Activated B cell treated with CpG ODN at 0.5 μM for 24 hours (primary cell): ENCODE measurements at regions of chr9 and their contacts with region 1.

Region 1: GRCh38 chr9:99231711-99232110 is 9.6 kb downstream of the SEC61B start:
- DNase-seq: peak; percentile 46
- ATAC-seq: peak; percentile 11
- H3K4me3 Mint-ChIP-seq: peak overlapping the region; percentile 47
- H3K27ac Mint-ChIP-seq: peak overlapping the region; percentile 65
- H3K4me1 Mint-ChIP-seq: peaks cover 45% of the 10 kb centered on the region
- H3K27me3 Mint-ChIP-seq: no peaks in the 10 kb centered on the region
- CTCF ChIP-seq: no peak

Region 2: GRCh38 chr9:99244344-99245260 is 12.9 kb after region 1 on chr9:
- CTCF ChIA-PET with region 1: interaction called, 19 read pairs
- POLR2A ChIA-PET with region 1: interaction called, 22 read pairs
- intact Hi-C with region 1: loop called (anchors 1 kb)
- DNase-seq: no peak
- ATAC-seq: peak; percentile 92
- H3K4me3 Mint-ChIP-seq: peak overlapping the region; percentile 55
- H3K27ac Mint-ChIP-seq: peak overlapping the region; percentile 95
- H3K4me1 Mint-ChIP-seq: peaks cover 51% of the 10 kb centered on the region
- H3K27me3 Mint-ChIP-seq: no peaks in the 10 kb centered on the region
- CTCF ChIP-seq: no peak

Region 3: DNA sequence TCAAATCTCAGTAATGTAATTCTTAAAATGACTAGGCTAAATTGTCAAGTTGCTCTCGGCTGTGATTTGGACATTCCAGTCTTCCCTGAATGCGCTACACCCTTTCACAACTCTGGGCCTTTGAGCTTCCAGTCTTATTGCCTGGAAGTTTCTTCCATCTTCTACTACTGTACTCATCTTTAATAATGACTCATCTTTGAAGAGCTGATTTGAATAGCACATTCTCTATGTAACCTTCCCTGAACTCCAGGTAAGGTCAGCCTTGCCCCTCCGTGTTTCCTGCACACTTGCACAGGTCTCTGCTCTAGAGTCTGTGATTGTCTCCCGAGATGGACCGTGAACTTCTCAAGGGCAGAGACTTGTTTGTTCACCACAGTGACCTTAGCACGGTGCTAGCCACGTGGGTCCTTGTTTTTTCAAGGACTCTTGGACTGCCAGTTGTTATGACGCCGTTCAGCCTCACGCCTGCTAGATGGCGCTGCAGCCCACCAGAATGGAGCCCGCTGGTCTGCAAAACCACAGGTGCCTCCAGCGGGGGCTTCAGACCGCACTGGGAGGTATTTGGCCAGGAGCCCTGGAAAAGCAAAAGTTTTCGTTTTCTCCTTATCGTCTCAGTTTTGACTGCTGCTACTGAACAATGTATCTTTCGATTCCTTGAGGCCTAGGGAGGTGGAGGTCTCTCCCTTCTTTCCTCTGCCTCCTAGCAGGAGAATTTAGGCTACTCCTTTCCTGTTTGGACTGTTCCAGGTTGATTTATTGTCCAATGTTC is 34.7 kb after region 1 on chr9:
- CTCF ChIA-PET with region 1: interaction called, 73 read pairs
- POLR2A ChIA-PET with region 1: interaction called, 21 read pairs
- intact Hi-C with region 1: loop called (anchors 1 kb)
- DNase-seq: peak; percentile 71
- ATAC-seq: peak; percentile 74
- H3K4me3 Mint-ChIP-seq: peak overlapping the region; percentile 67
- H3K27ac Mint-ChIP-seq: peak overlapping the region; percentile 85
- H3K4me1 Mint-ChIP-seq: peaks cover 49% of the 10 kb centered on the region
- H3K27me3 Mint-ChIP-seq: no peaks in the 10 kb centered on the region
- CTCF ChIP-seq: no peak

Region 4: GRCh38 chr9:99353408-99353807 is 121.7 kb after region 1 on chr9:
- CTCF ChIA-PET with region 1: no interaction called
- POLR2A ChIA-PET with region 1: no interaction called
- intact Hi-C with region 1: no loop called
- DNase-seq: no peak
- ATAC-seq: no peak
- H3K4me3 Mint-ChIP-seq: no peak overlapping the region
- H3K27ac Mint-ChIP-seq: no peak overlapping the region
- H3K4me1 Mint-ChIP-seq: no peaks in the 10 kb centered on the region
- H3K27me3 Mint-ChIP-seq: peaks cover 3% of the 10 kb centered on the region
- CTCF ChIP-seq: no peak

Region 5: DNA sequence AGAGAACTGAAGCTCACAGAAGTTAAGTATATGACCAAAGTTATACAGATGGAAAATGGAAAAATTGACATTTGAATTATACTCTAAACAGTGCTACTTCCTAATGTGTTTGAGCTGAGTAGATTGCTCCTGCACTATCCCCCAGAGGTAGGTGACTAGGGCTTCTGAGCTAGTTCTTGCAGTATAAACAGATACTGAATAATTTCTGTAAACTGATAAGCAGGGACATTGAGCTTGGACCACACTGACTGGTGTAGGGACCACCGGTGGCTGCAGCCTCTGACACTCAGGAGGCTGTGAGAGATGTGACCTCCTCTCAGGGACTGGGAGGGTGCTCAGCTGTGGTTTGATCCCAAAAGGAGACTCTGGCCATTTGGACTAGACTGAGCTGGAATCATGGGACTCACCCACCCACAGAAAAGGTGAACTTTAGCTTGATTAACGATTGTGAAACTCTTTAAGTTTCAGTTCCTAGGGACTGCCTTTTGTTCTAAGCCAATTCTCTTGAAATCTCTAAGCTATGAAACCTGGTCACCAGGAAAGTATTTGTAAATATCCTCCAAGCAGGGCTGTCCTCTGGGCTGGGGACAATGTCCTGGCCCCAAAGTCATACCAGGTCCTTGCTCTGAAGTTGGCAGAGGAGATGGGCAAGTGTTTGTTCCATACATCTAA is 281.9 kb after region 1 on chr9:
- CTCF ChIA-PET with region 1: interaction called, 10 read pairs
- POLR2A ChIA-PET with region 1: no interaction called
- intact Hi-C with region 1: loop called (anchors 5 kb)
- DNase-seq: peak; percentile 22
- ATAC-seq: peak; percentile 49
- H3K4me3 Mint-ChIP-seq: peak overlapping the region; percentile 61
- H3K27ac Mint-ChIP-seq: peak overlapping the region; percentile 84
- H3K4me1 Mint-ChIP-seq: peaks cover 88% of the 10 kb centered on the region
- H3K27me3 Mint-ChIP-seq: no peaks in the 10 kb centered on the region
- CTCF ChIP-seq: no peak

Region 6: GRCh38 chr9:99807276-99807852 is 575.7 kb after region 1 on chr9:
- CTCF ChIA-PET with region 1: interaction called, 15 read pairs
- POLR2A ChIA-PET with region 1: no interaction called
- intact Hi-C with region 1: no loop called
- DNase-seq: no peak
- ATAC-seq: peak; percentile 65
- H3K4me3 Mint-ChIP-seq: no peak overlapping the region
- H3K27ac Mint-ChIP-seq: peak overlapping the region; percentile 5
- H3K4me1 Mint-ChIP-seq: peaks cover 28% of the 10 kb centered on the region
- H3K27me3 Mint-ChIP-seq: no peaks in the 10 kb centered on the region
- CTCF ChIP-seq: no peak

Region 7: GRCh38 chr9:100098887-100099721 is 867.4 kb after region 1 on chr9 and contains the starts of genes ERP44 and INVS:
- CTCF ChIA-PET with region 1: no interaction called
- POLR2A ChIA-PET with region 1: no interaction called
- intact Hi-C with region 1: loop called (anchors 5 kb)
- DNase-seq: peak; percentile 86
- ATAC-seq: peak; percentile 99
- H3K4me3 Mint-ChIP-seq: peak within 1 kb of the TSS; percentile 100
- H3K27ac Mint-ChIP-seq: peak within 1 kb of the TSS; percentile 97
- H3K4me1 Mint-ChIP-seq: peaks cover 42% of the 10 kb centered on the region
- H3K27me3 Mint-ChIP-seq: no peaks in the 10 kb centered on the region
- CTCF ChIP-seq: no peak
- total RNA-seq, gene ERP44: 14.8 and 16.5 TPM in 2 replicates
- total RNA-seq, gene INVS: 26.7 and 34.0 TPM in 2 replicates